HCT116 (cell line): ENCODE measurements at regions of chr1 and their contacts with region 1.

Region 1: GRCh38 chr1:235597867-235598553 is 51.6 kb downstream of the GNG4 start:
- DNase-seq: peak; percentile 52
- ATAC-seq: peak; percentile 85
- H3K4me3 ChIP-seq: no peak overlapping the region
- H3K27ac ChIP-seq: no peak overlapping the region
- H3K4me1 ChIP-seq: peaks cover 0 to 5% of the 10 kb centered on the region in 2 experiments; a peak in 1 of 4 replicates
- H3K27me3 ChIP-seq: no peaks in the 10 kb centered on the region
- CTCF ChIP-seq: peak; percentile 52 to 66 (median 63); a peak in 5 of 6 replicates
- POLR2A ChIP-seq: no peak
- RAD21 ChIP-seq: peak; percentile 60

Region 2: GRCh38 chr1:235342039-235342438 is 256.0 kb before region 1 on chr1:
- CTCF ChIA-PET with region 1: no interaction called
- POLR2A ChIA-PET with region 1: no interaction called
- RAD21 ChIA-PET with region 1: no interaction called
- intact Hi-C with region 1: no loop called
- DNase-seq: no peak
- ATAC-seq: no peak
- H3K4me3 ChIP-seq: no peak overlapping the region
- H3K27ac ChIP-seq: no peak overlapping the region
- H3K4me1 ChIP-seq: no peaks in the 10 kb centered on the region
- H3K27me3 ChIP-seq: no peaks in the 10 kb centered on the region
- CTCF ChIP-seq: no peak
- POLR2A ChIP-seq: no peak
- RAD21 ChIP-seq: no peak

Region 3: GRCh38 chr1:235513495-235514366 is 84.3 kb before region 1 on chr1:
- CTCF ChIA-PET with region 1: interaction called, 10 read pairs
- POLR2A ChIA-PET with region 1: interaction called, 4 read pairs
- RAD21 ChIA-PET with region 1: no interaction called
- intact Hi-C with region 1: loop called (anchors 5 kb)
- DNase-seq: peak; percentile 59
- ATAC-seq: peak; percentile 72
- H3K4me3 ChIP-seq: no peak overlapping the region
- H3K27ac ChIP-seq: no peak overlapping the region
- H3K4me1 ChIP-seq: no peaks in the 10 kb centered on the region
- H3K27me3 ChIP-seq: no peaks in the 10 kb centered on the region
- CTCF ChIP-seq: peak; percentile 91 to 92 (median 91)
- POLR2A ChIP-seq: no peak
- RAD21 ChIP-seq: peak; percentile 92

Region 4: GRCh38 chr1:235614442-235614954 is 16.5 kb after region 1 on chr1:
- CTCF ChIA-PET with region 1: interaction called, 21 read pairs
- POLR2A ChIA-PET with region 1: no interaction called
- RAD21 ChIA-PET with region 1: no interaction called
- intact Hi-C with region 1: no loop called
- DNase-seq: no peak
- ATAC-seq: peak; percentile 61; the same call in 1 of the 2 replicates
- H3K4me3 ChIP-seq: no peak overlapping the region
- H3K27ac ChIP-seq: no peak overlapping the region
- H3K4me1 ChIP-seq: peaks cover 0 to 3% of the 10 kb centered on the region in 2 experiments; a peak in 1 of 4 replicates
- H3K27me3 ChIP-seq: no peaks in the 10 kb centered on the region
- CTCF ChIP-seq: no peak
- POLR2A ChIP-seq: no peak
- RAD21 ChIP-seq: no peak

Region 5: GRCh38 chr1:235652364-235652763 is 54.4 kb after region 1 on chr1:
- CTCF ChIA-PET with region 1: no interaction called
- POLR2A ChIA-PET with region 1: no interaction called
- RAD21 ChIA-PET with region 1: no interaction called
- intact Hi-C with region 1: no loop called
- DNase-seq: no peak
- ATAC-seq: no peak
- H3K4me3 ChIP-seq: no peak overlapping the region
- H3K27ac ChIP-seq: no peak overlapping the region
- H3K4me1 ChIP-seq: peaks cover 0 to 6% of the 10 kb centered on the region in 2 experiments; a peak in 2 of 4 replicates
- H3K27me3 ChIP-seq: no peaks in the 10 kb centered on the region
- CTCF ChIP-seq: no peak
- POLR2A ChIP-seq: no peak
- RAD21 ChIP-seq: no peak

Region 6: DNA sequence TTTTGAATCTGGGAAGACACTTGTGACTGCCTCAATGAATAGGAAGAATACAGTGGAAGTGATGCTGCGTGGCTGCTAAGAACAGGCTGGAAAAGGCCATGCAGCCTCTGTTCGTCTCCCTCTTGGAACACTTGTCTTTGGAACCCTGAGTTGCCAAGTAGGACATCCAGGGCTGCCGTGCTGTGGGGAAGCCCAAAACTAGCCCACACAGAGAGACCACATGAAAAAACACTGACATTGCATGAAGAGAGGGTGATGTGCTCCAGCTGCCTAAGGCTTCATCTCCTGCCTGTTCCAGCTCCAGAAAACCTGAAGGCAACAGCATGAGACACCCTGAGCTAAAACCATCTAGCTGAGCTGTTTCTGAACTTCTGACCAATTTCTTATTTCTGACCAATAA is 112.7 kb after region 1 on chr1:
- CTCF ChIA-PET with region 1: no interaction called
- POLR2A ChIA-PET with region 1: no interaction called
- RAD21 ChIA-PET with region 1: no interaction called
- intact Hi-C with region 1: no loop called
- DNase-seq: no peak
- ATAC-seq: no peak
- H3K4me3 ChIP-seq: no peak overlapping the region
- H3K27ac ChIP-seq: no peak overlapping the region
- H3K4me1 ChIP-seq: peaks cover 0 to 26% of the 10 kb centered on the region in 2 experiments; a peak in 2 of 4 replicates
- H3K27me3 ChIP-seq: no peaks in the 10 kb centered on the region
- CTCF ChIP-seq: no peak
- POLR2A ChIP-seq: no peak
- RAD21 ChIP-seq: no peak

Region 7: GRCh38 chr1:235730007-235730406 is 132.0 kb after region 1 on chr1:
- CTCF ChIA-PET with region 1: interaction called, 3 read pairs
- POLR2A ChIA-PET with region 1: no interaction called
- RAD21 ChIA-PET with region 1: no interaction called
- intact Hi-C with region 1: loop called (anchors 2 kb)
- DNase-seq: no peak
- ATAC-seq: no peak
- H3K4me3 ChIP-seq: no peak overlapping the region
- H3K27ac ChIP-seq: no peak overlapping the region
- H3K4me1 ChIP-seq: peaks cover 3 to 13% of the 10 kb centered on the region in 2 experiments
- H3K27me3 ChIP-seq: no peaks in the 10 kb centered on the region
- CTCF ChIP-seq: no peak
- POLR2A ChIP-seq: no peak
- RAD21 ChIP-seq: no peak

Region 8: DNA sequence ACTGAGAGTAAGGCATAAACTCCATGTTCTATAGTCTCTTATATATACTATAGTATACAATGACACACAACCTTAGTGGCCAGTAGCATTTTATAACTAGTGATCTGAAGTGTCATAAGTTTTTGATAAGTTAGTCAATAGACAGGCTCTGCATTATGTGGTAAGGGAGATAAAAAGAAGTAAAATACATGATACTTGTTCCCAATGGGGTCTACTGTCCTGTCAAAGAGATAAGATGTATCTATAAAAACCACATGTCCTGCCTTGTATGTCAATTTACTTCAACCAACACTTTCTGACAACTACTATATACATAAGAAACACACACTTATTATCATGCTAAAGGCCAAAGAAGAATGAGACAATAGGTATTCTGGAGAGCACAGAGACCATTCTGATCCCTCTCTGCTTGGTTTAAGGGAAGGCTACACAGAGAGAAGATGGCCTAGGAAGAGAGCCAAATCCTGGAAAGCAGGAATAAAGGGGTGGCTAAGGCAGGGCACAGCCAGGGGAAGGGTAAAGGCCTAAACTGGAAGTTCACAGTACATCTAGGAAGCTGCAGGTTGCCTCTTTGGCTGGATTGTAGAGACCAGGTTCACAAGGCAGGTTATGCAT is 177.3 kb after region 1 on chr1:
- CTCF ChIA-PET with region 1: no interaction called
- POLR2A ChIA-PET with region 1: no interaction called
- RAD21 ChIA-PET with region 1: no interaction called
- intact Hi-C with region 1: no loop called
- DNase-seq: no peak
- ATAC-seq: no peak
- H3K4me3 ChIP-seq: no peak overlapping the region
- H3K27ac ChIP-seq: no peak overlapping the region
- H3K4me1 ChIP-seq: no peaks in the 10 kb centered on the region
- H3K27me3 ChIP-seq: no peaks in the 10 kb centered on the region
- CTCF ChIP-seq: no peak
- POLR2A ChIP-seq: no peak
- RAD21 ChIP-seq: no peak